Mucosa of descending colon (tissue), 3 donors: ENCODE measurements at regions of chr2 and their contacts with region 1.

Region 1: DNA sequence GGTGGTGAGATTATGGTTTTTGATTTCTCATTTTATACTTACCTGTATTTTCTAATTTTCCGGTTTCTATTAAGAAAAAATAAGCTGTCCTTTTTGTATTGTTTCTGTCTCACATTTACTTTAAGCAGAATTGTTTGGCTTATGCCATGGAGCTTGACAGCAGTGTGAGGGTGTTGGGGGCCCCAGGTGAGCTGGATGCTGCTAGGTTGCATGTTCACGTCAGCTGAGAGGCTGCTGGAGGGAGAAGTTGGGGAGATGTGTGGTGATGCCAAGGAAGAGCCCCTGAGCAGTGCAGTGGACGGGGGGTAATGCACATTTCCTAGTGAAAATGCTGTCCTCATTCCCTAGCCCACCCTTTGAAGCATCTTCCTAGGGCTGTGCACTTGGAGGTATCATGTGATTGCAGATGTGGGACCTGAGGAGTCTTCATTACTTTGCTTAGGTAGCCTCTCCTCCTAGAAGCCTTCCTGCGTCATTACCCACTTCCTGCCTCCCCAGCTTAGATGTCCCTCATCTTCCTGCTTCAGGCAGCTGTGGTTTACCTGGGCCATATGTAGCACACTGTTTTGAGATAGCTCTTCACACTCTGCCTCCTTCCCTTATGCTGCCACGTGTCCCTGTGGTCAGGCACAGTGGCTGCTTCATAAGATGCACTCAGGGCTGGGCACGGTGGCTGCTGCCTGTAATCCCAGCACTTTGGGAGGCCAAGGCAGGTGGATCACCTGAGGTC is 16.2 kb downstream of the ATG16L1 start:
- DNase-seq: peak; percentile 49 to 65 (median 63)
- ATAC-seq: peak; percentile 94
- H3K4me3 ChIP-seq: no peak overlapping the region
- H3K4me1 ChIP-seq: no peaks in the 10 kb centered on the region
- CTCF ChIP-seq: no peak

Region 2: GRCh38 chr2:232839411-232840079 is 428.1 kb before region 1 on chr2:
- intact Hi-C with region 1: loop called in 1 of 2 experiments (anchors 10 kb)
- DNase-seq: peak in 2 of 3 donors; percentile 45 to 78
- ATAC-seq: peak; percentile 54
- H3K4me3 ChIP-seq: no peak overlapping the region
- H3K4me1 ChIP-seq: peaks cover 42% of the 10 kb centered on the region
- CTCF ChIP-seq: no peak

Region 3: DNA sequence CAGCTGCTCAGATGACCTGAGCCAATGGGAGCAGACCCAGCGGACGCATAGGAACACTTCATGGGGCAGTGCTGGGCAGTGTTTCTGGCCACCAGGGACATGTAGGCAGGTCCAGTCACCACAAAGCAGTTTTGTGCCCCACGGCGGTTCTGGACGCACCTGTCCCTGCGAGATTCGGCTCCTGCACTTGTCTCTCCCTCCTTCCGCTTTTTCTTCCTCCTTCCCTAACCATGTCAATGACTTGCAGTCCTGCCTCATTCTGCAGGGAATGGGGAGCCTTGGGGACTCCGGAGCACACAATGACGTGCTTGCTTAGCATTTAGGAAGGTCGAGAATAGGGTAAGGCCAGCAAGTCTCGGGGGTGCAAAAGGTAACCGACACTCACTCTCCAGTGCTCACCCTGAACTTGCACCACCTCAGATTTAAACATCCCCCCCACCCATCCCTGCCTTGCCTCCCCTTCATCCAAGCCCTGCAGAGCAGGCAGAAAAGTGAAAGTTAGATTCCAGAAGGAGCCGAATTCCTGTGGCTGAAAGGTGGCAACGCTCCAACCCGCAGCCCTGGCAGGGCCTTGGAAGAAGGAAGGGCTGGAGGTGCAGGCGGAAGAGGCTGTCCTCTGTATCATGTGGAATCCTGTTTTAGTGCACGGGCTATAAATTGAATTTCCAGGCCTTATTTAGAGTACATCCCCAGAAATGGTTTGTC is 56.7 kb before region 1 on chr2:
- intact Hi-C with region 1: no loop called
- DNase-seq: peak; percentile 63 to 77 (median 77)
- ATAC-seq: peak; percentile 88
- H3K4me3 ChIP-seq: no peak overlapping the region
- H3K4me1 ChIP-seq: no peaks in the 10 kb centered on the region
- CTCF ChIP-seq: no peak